Caco-2 (cell line): ENCODE measurements at regions of chr11 and their contacts with region 1.

Region 1: GRCh38 chr11:61756452-61757212 is 4.2 kb downstream of the MYRF start:
- DNase-seq: peak; percentile 88 to 93
- H3K4me3 ChIP-seq: peak overlapping the region; percentile 18; the same call in 1 of the 2 replicates
- H3K4me3 Mint-ChIP-seq: peak overlapping the region; percentile 71
- H3K27ac Mint-ChIP-seq: peak overlapping the region; percentile 94
- H3K4me1 ChIP-seq: peaks cover 68% of the 10 kb centered on the region
- H3K4me1 Mint-ChIP-seq: peaks cover 37% of the 10 kb centered on the region
- H3K27me3 ChIP-seq: no peaks in the 10 kb centered on the region
- H3K27me3 Mint-ChIP-seq: no peaks in the 10 kb centered on the region
- CTCF ChIP-seq: no peak

Region 2: DNA sequence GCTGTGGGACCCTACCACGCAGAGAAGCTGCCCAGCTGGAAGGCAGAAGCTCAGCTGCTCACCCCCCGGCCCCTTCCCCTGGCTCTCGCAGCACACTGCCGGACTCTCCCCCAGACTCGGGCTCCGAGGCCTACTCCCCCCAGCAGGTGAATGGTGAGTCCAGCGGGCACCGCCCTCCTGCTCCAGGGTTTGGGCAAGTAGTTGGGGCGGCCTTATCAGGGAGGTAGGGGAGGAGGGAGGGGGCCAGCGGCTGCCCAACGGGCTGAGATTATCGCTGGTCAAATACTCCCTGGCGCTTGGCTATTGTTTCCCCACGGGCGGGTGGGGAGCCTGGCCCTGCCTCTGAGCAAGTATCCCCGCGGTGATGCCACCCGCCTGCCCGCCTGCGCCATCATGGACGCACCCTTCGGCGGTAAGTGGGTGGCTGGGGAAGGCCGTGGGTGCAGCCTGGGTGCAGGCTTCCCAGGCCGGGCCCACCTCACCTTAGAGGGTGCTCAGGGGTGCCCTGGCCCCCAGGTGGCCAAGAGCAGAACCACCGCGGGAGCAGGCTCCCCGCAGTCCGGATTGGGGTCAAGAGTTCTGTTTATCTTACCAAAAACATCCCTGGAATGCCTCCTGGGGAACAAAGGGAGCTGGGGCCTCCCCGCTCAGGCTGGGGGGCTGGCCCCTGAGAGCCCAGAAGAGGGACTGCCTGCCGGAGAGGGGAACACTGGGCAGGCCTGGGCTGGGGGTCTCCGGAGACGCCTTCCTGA is 12.7 kb after region 1 on chr11:
- CTCF ChIA-PET with region 1: interaction called, 55 read pairs
- POLR2A ChIA-PET with region 1: interaction called, 9 read pairs
- intact Hi-C with region 1: loop called (anchors 1 kb)
- DNase-seq: peak; percentile 91 to 92
- H3K4me3 ChIP-seq: peak overlapping the region; percentile 1; the same call in 1 of the 2 replicates
- H3K4me3 Mint-ChIP-seq: peak overlapping the region; percentile 63
- H3K27ac Mint-ChIP-seq: peak overlapping the region; percentile 87
- H3K4me1 ChIP-seq: peaks cover 59% of the 10 kb centered on the region
- H3K4me1 Mint-ChIP-seq: peaks cover 21% of the 10 kb centered on the region
- H3K27me3 ChIP-seq: no peaks in the 10 kb centered on the region
- H3K27me3 Mint-ChIP-seq: no peaks in the 10 kb centered on the region
- CTCF ChIP-seq: peak; percentile 66 to 89

Region 3: GRCh38 chr11:61776551-61777075 is 20.0 kb after region 1 on chr11:
- CTCF ChIA-PET with region 1: interaction called, 3 read pairs
- POLR2A ChIA-PET with region 1: no interaction called
- intact Hi-C with region 1: loop called (anchors 1 kb)
- DNase-seq: peak; percentile 77 to 81
- H3K4me3 ChIP-seq: no peak overlapping the region
- H3K4me3 Mint-ChIP-seq: no peak overlapping the region
- H3K27ac Mint-ChIP-seq: no peak overlapping the region
- H3K4me1 ChIP-seq: peaks cover 7% of the 10 kb centered on the region; the same call in 1 of the 2 replicates
- H3K4me1 Mint-ChIP-seq: peaks cover 7% of the 10 kb centered on the region
- H3K27me3 ChIP-seq: no peaks in the 10 kb centered on the region
- H3K27me3 Mint-ChIP-seq: no peaks in the 10 kb centered on the region
- CTCF ChIP-seq: peak; percentile 76 to 82

Region 4: GRCh38 chr11:61899146-61899841 is 142.7 kb after region 1 on chr11:
- CTCF ChIA-PET with region 1: no interaction called
- POLR2A ChIA-PET with region 1: no interaction called
- intact Hi-C with region 1: no loop called
- DNase-seq: peak; percentile 89 to 96
- H3K4me3 ChIP-seq: no peak overlapping the region
- H3K4me3 Mint-ChIP-seq: no peak overlapping the region
- H3K27ac Mint-ChIP-seq: no peak overlapping the region
- H3K4me1 ChIP-seq: no peaks in the 10 kb centered on the region
- H3K4me1 Mint-ChIP-seq: no peaks in the 10 kb centered on the region
- H3K27me3 ChIP-seq: no peaks in the 10 kb centered on the region
- H3K27me3 Mint-ChIP-seq: no peaks in the 10 kb centered on the region
- CTCF ChIP-seq: peak; percentile 100